Heart right ventricle (tissue), 16 donors: ENCODE measurements at regions of chr16 and their contacts with region 1.

Region 1: GRCh38 chr16:85114909-85115567 is 2.8 kb upstream of the CIBAR2 start:
- DNase-seq: peak; percentile 89 to 91
- ATAC-seq: peak; percentile 79 to 95 (median 90)
- H3K4me3 ChIP-seq: peak overlapping the region in 4 of 10 donors; percentile 2 to 34 (median 22)
- H3K27ac ChIP-seq: peak overlapping the region in 4 of 10 donors; percentile 26 to 58 (median 43)
- H3K4me1 ChIP-seq: peaks cover 0 to 10% (median 5%) of the 10 kb centered on the region in 9 donors
- H3K27me3 ChIP-seq: peaks cover 0 to 3% (median 0%) of the 10 kb centered on the region in 7 donors
- CTCF ChIP-seq: peak; percentile 90 to 98 (median 95)

Region 2: DNA sequence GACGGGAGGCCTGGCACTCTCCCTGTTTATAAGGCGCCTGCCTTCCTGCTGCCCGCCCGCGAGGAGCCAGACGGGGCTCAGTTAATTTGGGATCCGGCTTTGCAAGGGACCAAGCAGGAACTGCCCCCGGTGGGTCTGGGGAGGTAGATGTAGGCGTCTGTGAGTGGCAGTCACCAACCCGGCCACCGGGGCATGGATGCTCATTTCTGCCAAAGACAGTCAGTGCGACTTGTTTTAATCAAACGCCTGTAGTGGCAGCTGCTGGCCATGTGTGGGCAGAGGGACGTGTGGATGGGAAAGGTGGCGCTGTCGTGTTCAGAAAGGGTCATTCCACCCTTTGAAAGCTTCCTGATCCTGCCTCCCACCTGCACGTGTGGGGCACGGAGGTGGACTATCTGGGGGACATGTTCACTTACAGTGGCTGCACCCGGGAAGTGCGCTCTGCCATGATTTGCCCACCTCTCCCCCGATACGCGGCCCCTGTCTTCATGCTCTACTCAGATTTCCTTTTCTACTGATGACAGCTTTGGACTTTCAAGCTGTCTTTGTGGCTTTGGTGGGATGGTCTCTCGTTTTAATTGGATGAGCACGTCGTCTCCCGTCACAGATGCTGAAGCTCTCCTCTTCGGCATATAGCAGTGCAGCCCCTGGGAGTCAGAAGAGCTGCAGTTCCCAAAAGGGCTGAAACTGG is 57.6 kb after region 1 on chr16:
- intact Hi-C with region 1: loop called in 7 of 10 experiments (anchors 5 to 10 kb)
- DNase-seq: peak in 1 of 2 donors; percentile 47
- ATAC-seq: peak in 7 of 8 donors; percentile 16 to 56 (median 51)
- H3K4me3 ChIP-seq: peak overlapping the region in 9 of 10 donors; percentile 21 to 58 (median 37)
- H3K27ac ChIP-seq: peak overlapping the region in 8 of 10 donors; percentile 14 to 57 (median 28)
- H3K4me1 ChIP-seq: peaks cover 5 to 86% (median 78%) of the 10 kb centered on the region in 9 donors
- H3K27me3 ChIP-seq: peaks cover 0 to 56% (median 0%) of the 10 kb centered on the region in 7 donors
- CTCF ChIP-seq: peak in 7 of 9 donors; percentile 35 to 62 (median 43)

Region 3: DNA sequence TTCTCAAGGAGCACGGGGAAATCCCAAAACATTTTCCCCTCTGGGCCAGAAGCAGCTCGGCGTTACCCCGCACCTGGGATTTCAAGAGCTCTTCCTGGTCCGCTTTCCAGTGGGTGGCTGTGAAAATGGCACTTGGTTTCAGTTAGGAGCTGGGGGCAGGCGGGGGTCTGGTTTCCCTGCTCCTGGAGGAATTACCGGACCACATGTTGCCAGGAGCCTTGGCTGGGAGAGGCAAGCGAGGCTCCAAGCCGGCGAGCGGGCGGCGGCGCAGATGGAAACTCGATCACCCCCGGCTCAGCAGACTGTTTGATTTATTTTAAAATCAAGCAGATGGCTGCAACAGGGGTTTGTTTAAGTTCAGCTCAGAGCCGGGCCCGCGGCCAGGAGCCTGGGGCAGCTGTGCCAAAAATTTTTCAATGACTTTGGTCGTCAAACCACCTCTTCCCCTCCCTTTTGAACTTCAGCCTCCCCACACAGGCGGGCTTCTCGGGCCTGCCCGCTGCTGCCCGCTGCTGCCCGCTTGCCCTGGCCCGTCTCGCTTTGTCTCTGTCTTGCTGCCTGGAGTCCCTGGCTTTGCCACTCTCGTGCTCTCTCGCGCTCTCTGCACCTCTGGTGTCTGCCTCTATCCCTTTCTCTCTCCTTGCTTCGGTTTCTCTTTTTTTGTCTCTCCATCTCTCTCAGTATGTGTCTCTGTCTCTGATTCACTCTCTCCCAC is 105.2 kb after region 1 on chr16:
- intact Hi-C with region 1: loop called in 2 of 10 experiments (anchors 5 to 10 kb)
- DNase-seq: peak; percentile 85
- ATAC-seq: peak; percentile 79 to 90 (median 86)
- H3K4me3 ChIP-seq: peak overlapping the region in 9 of 10 donors; percentile 12 to 45 (median 37)
- H3K27ac ChIP-seq: peak overlapping the region in 9 of 10 donors; percentile 21 to 79 (median 62)
- H3K4me1 ChIP-seq: peaks cover 8 to 26% (median 14%) of the 10 kb centered on the region in 9 donors
- H3K27me3 ChIP-seq: no peaks in the 10 kb centered on the region
- CTCF ChIP-seq: peak in 6 of 9 donors; percentile 8 to 41 (median 18)

Region 4: DNA sequence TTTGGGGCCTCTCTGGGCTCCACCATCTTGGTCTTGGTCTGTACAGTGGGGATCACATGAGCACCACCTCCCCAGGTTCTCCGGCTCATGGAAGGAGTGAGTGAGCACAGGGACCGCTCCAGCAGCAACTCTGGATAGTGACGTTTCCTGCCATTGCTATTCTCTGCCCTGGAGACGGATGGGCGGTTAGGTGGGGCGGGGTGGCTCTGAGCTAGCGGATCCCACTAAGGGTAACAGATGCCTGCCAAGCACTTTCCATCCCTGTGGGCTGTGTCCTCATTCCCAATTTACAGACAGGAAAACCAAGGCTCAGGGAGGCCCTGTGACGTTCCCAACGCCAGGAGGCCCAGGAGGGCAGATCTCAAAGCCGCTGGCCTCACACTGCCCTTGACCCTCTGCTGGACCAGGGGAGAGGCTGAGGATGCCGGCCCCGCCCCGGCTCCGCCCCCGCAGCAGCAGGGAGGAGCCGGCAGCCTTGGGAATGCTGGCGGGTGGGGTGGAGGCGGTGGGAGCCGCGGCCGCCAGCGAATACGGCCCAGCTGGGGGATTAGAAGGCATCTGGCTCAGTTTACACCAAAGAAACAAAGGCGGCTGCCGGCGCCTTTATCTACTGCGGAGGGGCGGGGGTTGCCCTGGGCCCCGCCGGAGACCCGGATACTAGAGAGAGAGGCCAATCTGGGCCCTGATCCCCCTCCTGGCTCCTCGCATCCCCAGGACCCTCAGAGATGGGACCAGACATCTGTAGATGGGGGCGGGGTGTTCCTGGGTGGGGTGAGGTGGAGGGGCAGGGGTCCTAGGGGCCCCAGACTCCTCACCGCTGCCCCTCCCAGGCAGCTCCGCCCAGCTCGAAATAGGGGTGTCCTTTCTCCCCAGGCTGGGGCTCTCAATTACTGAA is 119.5 kb after region 1 on chr16:
- intact Hi-C with region 1: loop called in 3 of 10 experiments (anchors 5 to 10 kb)
- DNase-seq: peak; percentile 65 to 76
- ATAC-seq: peak; percentile 37 to 83 (median 70)
- H3K4me3 ChIP-seq: peak overlapping the region in 9 of 10 donors; percentile 20 to 52 (median 46)
- H3K27ac ChIP-seq: peak overlapping the region in 8 of 10 donors; percentile 43 to 75 (median 53)
- H3K4me1 ChIP-seq: peaks cover 23 to 66% (median 46%) of the 10 kb centered on the region in 9 donors
- H3K27me3 ChIP-seq: peaks cover 0 to 29% (median 0%) of the 10 kb centered on the region in 7 donors
- CTCF ChIP-seq: peak in 1 of 9 donors; percentile 9

Region 5: GRCh38 chr16:85245307-85246172 is 130.5 kb after region 1 on chr16:
- intact Hi-C with region 1: loop called in 9 of 10 experiments (anchors 5 to 10 kb)
- DNase-seq: peak; percentile 59 to 68
- ATAC-seq: peak in 7 of 8 donors; percentile 46 to 77 (median 55)
- H3K4me3 ChIP-seq: no peak overlapping the region
- H3K27ac ChIP-seq: no peak overlapping the region
- H3K4me1 ChIP-seq: peaks cover 0 to 8% (median 0%) of the 10 kb centered on the region in 9 donors
- H3K27me3 ChIP-seq: no peaks in the 10 kb centered on the region
- CTCF ChIP-seq: peak; percentile 67 to 82 (median 76)

Region 6: DNA sequence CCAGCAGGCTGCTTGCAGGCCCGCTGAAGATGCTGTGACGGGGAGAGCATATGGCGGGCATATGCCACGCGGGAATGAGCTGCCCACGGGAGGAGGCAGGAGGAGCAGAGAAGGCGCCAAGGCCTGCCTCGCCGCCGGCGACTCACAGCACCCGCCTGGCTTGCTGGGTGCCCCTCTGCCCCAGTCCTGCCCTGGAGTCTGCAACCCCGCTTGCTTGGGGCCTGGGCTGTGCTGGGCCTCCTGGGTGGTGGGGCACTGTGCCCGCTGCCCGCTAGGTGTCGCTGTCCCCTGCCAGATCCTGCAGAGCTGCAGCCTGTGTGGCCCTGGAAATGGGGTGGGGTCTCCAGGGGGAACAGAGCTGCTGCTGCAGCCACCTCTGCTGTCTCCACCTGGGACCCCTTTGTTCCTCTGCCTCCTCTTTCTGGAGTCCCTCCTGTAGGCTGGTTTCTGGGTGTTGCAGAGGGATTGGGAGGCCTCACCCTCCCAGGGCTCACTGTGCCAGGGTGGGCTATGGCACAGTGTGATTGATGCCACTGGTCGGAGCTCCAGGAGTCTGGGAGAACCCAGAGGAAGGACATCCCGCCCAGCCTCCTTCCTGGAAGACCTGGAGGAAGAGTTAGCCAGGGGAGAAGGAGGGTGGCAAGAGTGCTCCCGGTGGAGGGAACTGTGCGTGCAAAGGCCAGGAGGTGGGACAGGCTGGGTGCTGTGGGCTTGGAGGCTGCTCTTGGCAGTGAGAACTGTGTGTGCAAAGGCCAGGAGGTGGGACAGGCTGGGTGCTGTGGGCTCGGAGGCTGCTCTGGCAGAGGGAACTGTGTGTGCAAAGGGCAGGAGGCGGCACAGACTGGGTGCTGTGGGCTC is 138.3 kb after region 1 on chr16:
- intact Hi-C with region 1: loop called in 9 of 10 experiments (anchors 5 to 10 kb)
- DNase-seq: peak; percentile 34 to 66
- ATAC-seq: peak; percentile 48 to 85 (median 69)
- H3K4me3 ChIP-seq: no peak overlapping the region
- H3K27ac ChIP-seq: no peak overlapping the region
- H3K4me1 ChIP-seq: peaks cover 0 to 8% (median 0%) of the 10 kb centered on the region in 9 donors
- H3K27me3 ChIP-seq: peaks cover 0 to 8% (median 0%) of the 10 kb centered on the region in 7 donors
- CTCF ChIP-seq: peak; percentile 84 to 95 (median 92)